ENCODE measurements at regions of chr18 and their contacts with region 1.

Region 1: GRCh38 chr18:45951016-45951714 is 16.0 kb downstream of the EPG5 start:
- DNase-seq: peak; percentile 46
- H3K4me3 ChIP-seq: no peak overlapping the region
- H3K27ac ChIP-seq: peak overlapping the region; percentile 49
- H3K27me3 ChIP-seq: no peaks in the 10 kb centered on the region
- CTCF ChIP-seq: no peak

Region 2: DNA sequence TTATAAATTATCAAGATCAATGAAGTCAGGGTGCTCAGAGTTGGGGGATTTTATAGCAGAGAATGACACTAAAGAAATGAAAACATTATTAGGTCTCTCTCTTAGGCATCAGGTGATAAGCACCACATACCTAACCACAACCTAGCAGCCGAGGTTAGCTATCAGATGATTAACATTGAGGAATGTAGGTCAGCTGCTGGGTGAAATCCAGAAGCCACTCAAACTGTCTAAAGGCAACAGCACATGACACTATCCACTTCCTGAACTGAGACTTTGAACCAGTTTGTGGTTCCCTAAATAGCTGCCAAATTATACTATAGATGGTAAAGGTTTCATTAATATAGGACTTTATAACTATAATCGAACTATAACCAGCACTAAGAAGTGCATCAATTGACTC is 11.3 kb after region 1 on chr18:
- CTCF ChIA-PET with region 1: no interaction called
- POLR2A ChIA-PET with region 1: interaction called, 11 read pairs
- DNase-seq: no peak
- H3K4me3 ChIP-seq: no peak overlapping the region
- H3K27ac ChIP-seq: peak overlapping the region; percentile 63
- H3K27me3 ChIP-seq: no peaks in the 10 kb centered on the region
- CTCF ChIP-seq: no peak

Measured in AG04450 (cell line).